ENCODE measurements at regions of chr17 and their contacts with region 1.

Region 1: DNA sequence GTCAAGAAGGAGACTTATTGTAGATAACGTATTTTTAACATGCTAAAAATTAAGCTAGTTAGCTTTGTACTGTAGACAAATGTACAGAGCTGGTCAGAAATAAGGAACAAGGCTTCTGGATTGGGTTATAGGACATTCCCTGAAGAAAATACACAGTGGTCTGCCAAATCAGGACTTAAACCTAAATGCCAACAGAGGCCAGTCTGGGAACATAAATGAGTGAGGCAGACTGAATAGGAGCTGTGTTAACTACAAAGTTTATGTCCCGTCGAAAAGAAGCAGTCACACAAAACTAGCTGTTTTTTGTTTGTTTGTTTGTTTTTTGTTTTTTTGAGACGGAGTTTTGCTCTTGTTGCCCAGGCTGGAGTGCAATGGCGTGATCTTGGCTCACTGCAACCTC is 120.4 kb upstream of the C17orf78 start:
- DNase-seq: no peak
- CTCF ChIP-seq: no peak

Region 2: DNA sequence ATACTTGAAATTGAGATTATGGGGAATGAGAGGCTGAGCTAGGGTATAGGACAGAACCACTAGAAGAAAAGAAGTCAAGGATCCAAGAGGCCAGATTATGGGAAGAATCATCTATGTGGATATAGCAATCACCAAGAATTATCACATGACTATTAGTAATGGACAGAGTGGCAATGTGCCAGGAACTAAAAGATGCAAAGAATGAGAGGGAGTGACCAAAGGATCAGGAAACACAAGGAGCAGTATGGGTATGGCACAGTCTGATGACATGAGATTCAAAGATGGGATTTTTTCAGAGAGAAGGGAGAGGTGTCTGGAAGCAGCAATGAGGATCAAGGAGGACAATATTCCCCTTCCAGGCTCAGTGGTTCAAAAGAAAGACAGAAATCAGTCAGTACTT is 94.5 kb before region 1 on chr17:
- CTCF ChIA-PET with region 1: no interaction called
- POLR2A ChIA-PET with region 1: no interaction called
- DNase-seq: no peak
- CTCF ChIP-seq: no peak

Region 3: DNA sequence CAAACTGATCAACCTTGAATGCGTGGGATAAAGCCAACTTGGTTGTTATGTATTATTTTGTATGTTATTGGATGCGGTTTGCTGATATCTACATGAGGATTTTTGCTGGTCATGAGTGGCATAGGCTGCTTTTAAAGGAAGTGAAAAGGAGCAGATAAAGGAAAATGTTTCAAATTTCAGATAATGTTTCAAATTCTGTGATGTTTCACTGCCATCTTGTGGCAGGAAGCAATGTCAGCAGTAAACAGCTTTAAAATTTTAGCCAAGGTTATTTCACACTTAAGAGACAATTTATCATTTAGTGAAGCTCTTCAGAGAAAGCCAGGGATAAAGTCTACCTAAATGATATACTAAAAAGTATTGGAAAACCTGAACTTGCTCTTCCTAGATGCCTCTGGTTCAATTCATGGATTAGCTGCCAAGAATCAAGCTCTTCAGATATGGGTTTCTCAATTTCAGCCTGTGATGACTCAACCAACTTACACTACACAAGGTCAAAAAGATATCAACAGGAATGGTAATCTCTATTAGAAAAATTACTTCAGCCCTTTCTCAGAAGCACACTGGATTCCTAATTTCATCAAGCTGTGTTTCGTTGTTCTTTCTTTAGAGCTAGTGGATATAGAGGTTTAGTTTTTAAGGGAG is 15.6 kb before region 1 on chr17:
- CTCF ChIA-PET with region 1: interaction called, 15 read pairs
- POLR2A ChIA-PET with region 1: no interaction called
- DNase-seq: peak; percentile 28
- CTCF ChIP-seq: peak; percentile 77

Measured in GM10248 (cell line).